ENCODE measurements at regions of chr1 and their contacts with region 1.

Region 1: GRCh38 chr1:65525266-65526048 is 105.0 kb downstream of the LEPR start:
- DNase-seq: no peak
- H3K4me3 ChIP-seq: peak overlapping the region; percentile 34 to 84 (median 38)
- H3K27ac ChIP-seq: no peak overlapping the region
- H3K4me1 ChIP-seq: peaks cover 27% of the 10 kb centered on the region
- H3K27me3 ChIP-seq: no peaks in the 10 kb centered on the region
- CTCF ChIP-seq: no peak
- POLR2A ChIP-seq: no peak

Region 2: GRCh38 chr1:65059930-65060538 is 465.4 kb before region 1 on chr1:
- CTCF ChIA-PET with region 1: no interaction called
- POLR2A ChIA-PET with region 1: no interaction called
- dilution Hi-C with region 1: no loop called
- intact Hi-C with region 1: loop called (anchors 5 kb)
- DNase-seq: peak; percentile 69
- H3K4me3 ChIP-seq: no peak overlapping the region
- H3K27ac ChIP-seq: no peak overlapping the region
- H3K4me1 ChIP-seq: peaks cover 3% of the 10 kb centered on the region
- H3K27me3 ChIP-seq: no peaks in the 10 kb centered on the region
- CTCF ChIP-seq: peak; percentile 33 to 39
- POLR2A ChIP-seq: no peak

Region 3: GRCh38 chr1:65509912-65510680 is 15.4 kb before region 1 on chr1:
- CTCF ChIA-PET with region 1: no interaction called
- POLR2A ChIA-PET with region 1: no interaction called
- dilution Hi-C with region 1: no loop called
- intact Hi-C with region 1: loop called (anchors 1 kb)
- DNase-seq: peak; percentile 86
- H3K4me3 ChIP-seq: no peak overlapping the region
- H3K27ac ChIP-seq: no peak overlapping the region
- H3K4me1 ChIP-seq: peaks cover 27% of the 10 kb centered on the region
- H3K27me3 ChIP-seq: no peaks in the 10 kb centered on the region
- CTCF ChIP-seq: no peak
- POLR2A ChIP-seq: no peak

Region 4: GRCh38 chr1:65615859-65616258 is 90.4 kb after region 1 on chr1:
- CTCF ChIA-PET with region 1: no interaction called
- POLR2A ChIA-PET with region 1: no interaction called
- dilution Hi-C with region 1: no loop called
- intact Hi-C with region 1: loop called (anchors 5 kb)
- DNase-seq: peak; percentile 45
- H3K4me3 ChIP-seq: no peak overlapping the region
- H3K27ac ChIP-seq: no peak overlapping the region
- H3K4me1 ChIP-seq: peaks cover 20% of the 10 kb centered on the region
- H3K27me3 ChIP-seq: no peaks in the 10 kb centered on the region
- CTCF ChIP-seq: no peak
- POLR2A ChIP-seq: no peak

Measured in endothelial cell of umbilical vein (primary cell).